ENCODE measurements at regions of chr3 and their contacts with region 1.

Region 1: DNA sequence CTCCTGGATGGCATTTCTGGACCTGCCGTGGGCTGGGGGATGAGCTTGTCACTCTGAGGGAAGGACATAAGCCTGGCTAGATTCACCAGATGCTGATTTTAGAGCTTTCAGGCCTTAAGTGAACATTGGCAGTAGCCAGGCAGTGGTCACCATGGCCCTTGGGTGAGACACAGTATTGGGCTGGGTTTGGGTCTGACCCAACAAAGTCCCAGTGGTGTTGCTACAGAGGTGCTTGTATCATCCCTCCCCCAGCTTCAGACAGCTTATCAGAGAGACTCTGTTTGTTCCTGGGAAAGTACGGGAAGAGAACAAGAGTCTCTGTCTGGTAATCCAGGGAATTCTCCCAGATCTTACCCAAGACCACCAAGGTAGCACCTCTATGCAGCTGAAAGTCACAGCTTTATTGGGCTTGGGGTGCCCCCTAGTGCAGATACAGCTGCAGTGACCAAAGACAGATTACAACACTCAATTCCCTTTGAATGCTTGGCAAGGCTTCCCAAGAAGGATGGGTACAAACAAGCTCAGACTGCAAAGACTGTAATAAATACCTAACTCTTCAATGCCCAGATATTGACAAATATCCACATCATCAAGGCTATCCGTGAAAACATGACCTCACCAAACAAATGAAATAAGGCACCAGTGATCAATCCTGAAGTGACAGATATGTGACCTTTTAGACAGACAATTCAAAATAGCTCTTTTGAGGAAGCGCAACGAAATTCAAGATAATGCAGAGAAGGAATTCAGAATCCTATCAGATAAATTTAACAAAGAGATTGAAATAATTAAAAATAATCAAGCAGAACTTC is 9.9 kb upstream of the RUVBL1 start:
- DNase-seq: peak in 4 of 5 donors; percentile 40 to 57 (median 44)
- H3K4me3 ChIP-seq: no peak overlapping the region
- H3K4me3 Mint-ChIP-seq: no peak overlapping the region
- H3K27ac ChIP-seq: no peak overlapping the region
- H3K27ac Mint-ChIP-seq: peak overlapping the region in 3 of 7 donors; percentile 36 to 62 (median 48)
- H3K4me1 ChIP-seq: no peaks in the 10 kb centered on the region
- H3K4me1 Mint-ChIP-seq: peaks cover 0 to 3% (median 0%) of the 10 kb centered on the region in 4 donors
- H3K27me3 ChIP-seq: no peaks in the 10 kb centered on the region
- H3K27me3 Mint-ChIP-seq: peaks cover 0 to 5% of the 10 kb centered on the region in 2 donors

Region 2: GRCh38 chr3:127547761-127548605 is 585.5 kb before region 1 on chr3:
- CTCF ChIA-PET with region 1: no interaction called
- POLR2A ChIA-PET with region 1: no interaction called
- intact Hi-C with region 1: no loop called
- DNase-seq: peak; percentile 67 to 78 (median 69)
- H3K4me3 ChIP-seq: peak overlapping the region; percentile 59 to 73
- H3K4me3 Mint-ChIP-seq: peak overlapping the region; percentile 67 to 85 (median 78)
- H3K27ac ChIP-seq: no peak overlapping the region
- H3K27ac Mint-ChIP-seq: peak overlapping the region in 4 of 7 donors; percentile 3 to 72 (median 60)
- H3K4me1 ChIP-seq: peaks cover 14% of the 10 kb centered on the region
- H3K4me1 Mint-ChIP-seq: peaks cover 3 to 25% (median 11%) of the 10 kb centered on the region in 4 donors
- H3K27me3 ChIP-seq: no peaks in the 10 kb centered on the region
- H3K27me3 Mint-ChIP-seq: peaks cover 0 to 6% of the 10 kb centered on the region in 2 donors

Region 3: DNA sequence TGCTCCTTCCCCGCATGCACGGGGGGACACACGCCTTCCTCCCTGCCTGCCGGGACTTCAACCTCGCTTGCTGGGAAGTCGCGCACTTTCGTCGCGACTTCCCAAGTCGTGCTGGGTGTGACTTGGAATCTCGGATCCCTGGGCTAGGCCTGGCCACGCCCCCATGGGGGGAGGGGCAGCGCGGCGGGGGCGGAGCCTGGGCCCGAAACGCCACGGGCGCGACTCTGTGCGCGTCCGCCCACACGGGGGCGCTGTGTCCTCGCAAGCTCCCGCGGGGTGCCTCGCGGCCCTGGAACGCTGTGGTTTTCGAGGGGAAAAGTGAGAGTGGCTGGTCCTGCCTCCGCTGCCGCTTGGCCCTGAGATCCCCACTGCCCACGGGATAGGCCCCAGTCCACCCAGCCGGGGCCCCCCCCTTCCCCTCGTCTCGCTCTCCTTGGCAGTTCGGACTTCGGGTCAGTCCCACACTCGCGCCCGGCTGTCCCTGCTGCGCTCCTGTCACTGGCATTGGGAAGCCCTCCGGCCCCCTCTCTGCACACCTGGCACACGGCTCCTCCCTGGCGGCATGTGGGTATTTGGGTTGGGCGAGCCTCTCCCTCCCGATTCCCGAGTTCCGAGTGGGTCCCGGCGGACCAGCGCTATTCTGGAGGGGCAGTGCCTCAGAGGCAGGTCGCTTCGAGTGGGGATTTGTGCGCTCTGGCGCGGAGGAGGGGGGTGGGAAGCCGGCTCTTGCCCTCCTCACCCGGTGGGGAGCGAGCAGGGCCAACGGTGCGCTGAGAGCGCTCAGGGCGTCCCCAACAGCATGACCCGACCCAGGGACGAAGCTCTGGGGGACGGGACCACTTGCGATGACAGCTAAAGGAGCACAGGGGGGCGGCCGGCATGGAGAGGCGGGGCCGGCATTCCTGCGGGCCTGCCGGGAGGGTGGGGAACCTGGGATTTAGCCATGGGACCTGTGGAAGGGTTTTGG is 57.7 kb before region 1 on chr3:
- CTCF ChIA-PET with region 1: interaction called, 15 read pairs
- POLR2A ChIA-PET with region 1: no interaction called
- intact Hi-C with region 1: loop called (anchors 1 kb)
- DNase-seq: peak; percentile 81 to 85 (median 82)
- H3K4me3 ChIP-seq: peak overlapping the region; percentile 29 to 39
- H3K4me3 Mint-ChIP-seq: peak overlapping the region; percentile 65 to 82 (median 75)
- H3K27ac ChIP-seq: peak overlapping the region; percentile 14
- H3K27ac Mint-ChIP-seq: peak overlapping the region in 6 of 7 donors; percentile 37 to 85 (median 64)
- H3K4me1 ChIP-seq: peaks cover 20% of the 10 kb centered on the region
- H3K4me1 Mint-ChIP-seq: peaks cover 2 to 27% (median 6%) of the 10 kb centered on the region in 4 donors
- H3K27me3 ChIP-seq: no peaks in the 10 kb centered on the region
- H3K27me3 Mint-ChIP-seq: no peaks in the 10 kb centered on the region

Measured in CD4-positive, alpha-beta memory T cell (primary cell).